ENCODE measurements at regions of chr2 and their contacts with region 1.

Region 1: GRCh38 chr2:188395903-188396689 is 104.4 kb downstream of the GULP1 start:
- DNase-seq: no peak
- ATAC-seq: no peak
- H3K4me3 ChIP-seq: no peak overlapping the region
- H3K4me3 Mint-ChIP-seq: no peak overlapping the region
- H3K27ac ChIP-seq: no peak overlapping the region
- H3K27ac Mint-ChIP-seq: no peak overlapping the region
- H3K4me1 ChIP-seq: no peaks in the 10 kb centered on the region
- H3K4me1 Mint-ChIP-seq: no peaks in the 10 kb centered on the region
- H3K27me3 ChIP-seq: no peaks in the 10 kb centered on the region
- H3K27me3 Mint-ChIP-seq: no peaks in the 10 kb centered on the region
- CTCF ChIP-seq: no peak

Region 2: GRCh38 chr2:188369365-188369764 is 26.7 kb before region 1 on chr2:
- intact Hi-C with region 1: loop called (anchors 2 kb)
- DNase-seq: peak in 1 of 2 donors; percentile 16
- ATAC-seq: no peak
- H3K4me3 ChIP-seq: no peak overlapping the region
- H3K4me3 Mint-ChIP-seq: no peak overlapping the region
- H3K27ac ChIP-seq: no peak overlapping the region
- H3K27ac Mint-ChIP-seq: no peak overlapping the region
- H3K4me1 ChIP-seq: no peaks in the 10 kb centered on the region
- H3K4me1 Mint-ChIP-seq: no peaks in the 10 kb centered on the region
- H3K27me3 ChIP-seq: no peaks in the 10 kb centered on the region
- H3K27me3 Mint-ChIP-seq: no peaks in the 10 kb centered on the region
- CTCF ChIP-seq: no peak